Heart right ventricle (tissue), 16 donors: ENCODE measurements at regions of chr19 and their contacts with region 1.

Region 1: GRCh38 chr19:11155373-11156120 is at the start of gene SPC24:
- DNase-seq: peak; percentile 96
- ATAC-seq: peak; percentile 91 to 96 (median 94)
- H3K4me3 ChIP-seq: peak within 1 kb of the TSS in 9 of 10 donors; percentile 38 to 80 (median 54)
- H3K27ac ChIP-seq: peak within 1 kb of the TSS in 9 of 10 donors; percentile 57 to 89 (median 72)
- H3K4me1 ChIP-seq: peaks cover 10 to 73% (median 43%) of the 10 kb centered on the region in 9 donors
- H3K27me3 ChIP-seq: no peaks in the 10 kb centered on the region
- CTCF ChIP-seq: peak in 2 of 9 donors; percentile 12 to 20
- total RNA-seq, gene SPC24: 1.6 to 8.5 (median 3.2) TPM

Region 2: DNA sequence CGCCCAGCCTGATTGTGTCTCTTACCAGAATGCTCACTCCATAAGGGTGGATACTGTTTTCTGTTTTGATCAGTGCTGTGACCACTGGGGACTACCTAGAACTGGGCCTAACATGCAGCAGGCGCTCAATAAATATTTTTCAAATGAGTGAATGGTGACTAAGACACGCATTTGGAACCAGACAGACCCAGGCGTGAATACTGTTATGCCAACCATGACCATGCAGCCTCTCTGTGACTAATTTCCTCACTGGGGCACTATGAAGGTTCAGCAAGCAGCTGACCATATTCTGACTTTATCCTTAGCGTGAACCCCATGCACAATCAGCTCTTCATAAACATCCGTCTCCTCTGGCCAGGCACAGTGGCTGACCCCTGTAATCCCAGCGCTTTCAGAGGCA is 13.0 kb after region 1 on chr19:
- intact Hi-C with region 1: no loop called
- DNase-seq: no peak
- ATAC-seq: no peak
- H3K4me3 ChIP-seq: no peak overlapping the region
- H3K27ac ChIP-seq: peak overlapping the region in 3 of 10 donors; percentile 15 to 41 (median 16)
- H3K4me1 ChIP-seq: peaks cover 8 to 43% (median 31%) of the 10 kb centered on the region in 9 donors
- H3K27me3 ChIP-seq: no peaks in the 10 kb centered on the region
- CTCF ChIP-seq: no peak

Region 3: DNA sequence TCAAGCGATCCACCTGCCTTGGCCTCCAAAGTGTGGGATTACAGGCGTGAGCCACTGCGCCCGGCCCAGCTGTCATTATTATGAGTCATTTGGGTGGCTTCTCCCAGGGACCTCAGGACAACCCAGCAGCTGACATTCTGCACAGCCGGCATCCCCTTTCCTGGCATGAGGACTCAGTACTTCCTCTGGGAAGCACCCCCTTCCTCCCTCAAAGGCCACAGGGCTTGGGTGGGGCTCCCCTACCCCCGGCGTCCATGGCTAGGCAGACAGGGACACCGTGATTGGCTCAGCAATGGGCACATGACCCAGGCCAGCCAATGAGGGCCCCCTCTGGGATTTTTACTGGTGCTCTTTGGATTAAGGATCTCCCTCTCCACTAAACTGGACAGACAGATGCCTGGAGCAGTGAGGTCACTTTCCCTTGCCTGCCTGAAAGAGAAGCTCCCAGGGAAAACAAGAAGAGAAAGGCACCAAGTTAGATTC is 35.8 kb after region 1 on chr19:
- intact Hi-C with region 1: loop called in 4 of 10 experiments (anchors 5 kb)
- DNase-seq: peak; percentile 72 to 85
- ATAC-seq: peak; percentile 66 to 91 (median 76)
- H3K4me3 ChIP-seq: peak overlapping the region in 2 of 10 donors; percentile 3 to 7
- H3K27ac ChIP-seq: peak overlapping the region; percentile 9 to 97 (median 74)
- H3K4me1 ChIP-seq: peaks cover 31 to 93% (median 85%) of the 10 kb centered on the region in 9 donors
- H3K27me3 ChIP-seq: peaks cover 0 to under 1% (median 0%) of the 10 kb centered on the region in 7 donors
- CTCF ChIP-seq: no peak